ENCODE measurements at regions of chr7 and their contacts with region 1.

Region 1: DNA sequence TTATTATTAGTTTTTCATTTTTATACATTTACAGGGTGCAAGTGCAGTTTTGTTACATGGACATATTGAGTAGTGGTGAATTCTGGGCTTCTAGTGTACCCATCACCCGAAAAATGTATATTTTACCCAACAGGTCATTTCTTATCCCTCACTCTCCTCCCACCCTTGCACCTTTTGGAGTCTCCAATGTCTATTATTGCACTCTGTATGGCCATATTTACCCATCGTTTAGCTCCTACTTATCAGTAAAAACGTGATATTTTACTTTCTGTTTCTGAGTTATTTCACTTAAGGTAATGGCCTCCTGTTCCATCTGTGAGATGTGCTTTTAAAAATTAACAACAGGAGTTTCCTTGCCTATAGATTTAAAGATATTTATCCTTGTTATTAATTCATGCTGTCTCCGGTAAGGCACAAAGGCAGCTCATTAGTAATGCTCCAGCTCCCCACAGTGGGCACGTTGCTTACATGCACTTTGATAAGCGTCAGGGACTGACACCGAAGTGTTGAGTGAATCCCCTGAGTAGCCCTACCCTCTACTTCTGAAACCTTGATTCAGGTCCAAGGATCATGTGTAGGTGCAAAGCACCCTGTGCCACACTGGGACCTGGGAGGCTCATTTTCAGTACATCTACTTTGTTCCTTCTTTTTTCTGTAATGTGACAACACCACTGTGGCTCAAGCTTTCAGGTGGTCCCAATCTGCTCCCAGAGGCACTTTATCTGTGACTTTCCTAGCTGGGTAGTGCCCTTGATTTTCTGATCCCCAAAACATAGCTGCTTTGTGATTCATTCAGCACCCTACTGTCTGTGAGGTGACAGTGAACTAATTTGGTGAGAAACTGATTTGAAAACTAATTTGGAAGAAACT is 27.3 kb downstream of the HYAL4 start:
- DNase-seq: peak; percentile 74
- H3K4me3 ChIP-seq: no peak overlapping the region
- H3K27ac ChIP-seq: no peak overlapping the region
- H3K4me1 ChIP-seq: no peaks in the 10 kb centered on the region
- H3K27me3 ChIP-seq: no peaks in the 10 kb centered on the region
- CTCF ChIP-seq: peak; percentile 53 to 67
- POLR2A ChIP-seq: no peak

Region 2: GRCh38 chr7:122689346-122690109 is 1182.7 kb before region 1 on chr7:
- CTCF ChIA-PET with region 1: no interaction called
- POLR2A ChIA-PET with region 1: no interaction called
- dilution Hi-C with region 1: no loop called
- intact Hi-C with region 1: no loop called
- DNase-seq: no peak
- H3K4me3 ChIP-seq: no peak overlapping the region
- H3K27ac ChIP-seq: no peak overlapping the region
- H3K4me1 ChIP-seq: no peaks in the 10 kb centered on the region
- H3K27me3 ChIP-seq: no peaks in the 10 kb centered on the region
- CTCF ChIP-seq: no peak
- POLR2A ChIP-seq: no peak

Region 3: DNA sequence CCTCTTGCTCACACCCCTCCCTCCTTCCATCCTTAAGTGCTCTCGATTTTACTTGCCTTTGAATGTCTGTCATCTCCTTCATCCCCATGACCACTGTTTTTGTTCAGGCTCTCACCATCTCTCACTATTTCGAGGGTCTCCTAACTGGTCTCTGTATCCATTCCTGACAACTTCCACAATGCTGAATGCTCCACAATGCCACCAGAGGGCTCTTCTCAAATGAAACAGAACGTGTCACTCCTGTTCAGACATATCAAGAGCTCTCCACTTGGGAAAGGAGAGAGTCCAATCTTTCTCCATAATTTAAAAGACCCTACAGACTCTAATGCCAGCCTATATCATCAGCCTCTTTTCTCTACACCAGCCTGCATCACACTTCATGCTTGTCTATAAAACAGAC is 663.4 kb before region 1 on chr7:
- CTCF ChIA-PET with region 1: interaction called, 13 read pairs
- POLR2A ChIA-PET with region 1: no interaction called
- dilution Hi-C with region 1: no loop called
- intact Hi-C with region 1: no loop called
- DNase-seq: peak; percentile 11
- H3K4me3 ChIP-seq: no peak overlapping the region
- H3K27ac ChIP-seq: no peak overlapping the region
- H3K4me1 ChIP-seq: no peaks in the 10 kb centered on the region
- H3K27me3 ChIP-seq: no peaks in the 10 kb centered on the region
- CTCF ChIP-seq: peak in 1 of 2 donors; percentile 29
- POLR2A ChIP-seq: no peak

Region 4: DNA sequence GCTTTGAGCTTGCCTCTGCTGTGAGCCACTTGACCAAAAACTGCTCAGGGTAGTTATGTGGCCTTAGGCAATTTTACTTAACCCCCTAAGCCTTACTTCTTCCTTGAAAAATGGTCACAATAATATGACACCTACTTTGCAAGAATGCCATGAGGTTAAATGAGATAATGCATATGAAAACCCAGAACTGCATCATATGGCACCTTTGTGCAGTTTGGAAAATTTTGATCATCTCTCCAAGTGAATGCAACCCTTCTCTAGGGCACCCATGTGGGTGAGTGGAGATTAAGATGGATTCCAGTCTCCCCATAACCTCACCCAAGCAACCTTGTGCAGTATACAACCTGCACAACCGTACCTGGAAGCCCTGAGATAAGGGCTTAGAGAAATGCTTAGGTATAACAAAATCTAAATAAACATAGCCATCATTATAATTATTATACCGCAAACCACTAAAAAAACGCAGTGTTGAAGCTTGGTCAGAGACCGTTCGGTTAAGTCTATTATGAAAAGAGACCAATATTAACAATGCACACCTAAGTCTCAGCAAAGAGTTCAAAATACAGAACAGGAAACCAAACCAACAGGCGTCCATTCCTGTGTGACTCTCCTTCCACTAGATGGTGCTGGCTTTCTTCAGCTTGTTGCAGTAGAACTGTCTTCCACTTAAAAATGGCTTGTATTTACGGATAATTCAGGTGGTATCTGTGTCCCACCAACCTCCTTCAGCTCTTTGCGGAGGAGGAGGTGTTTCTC is 291.6 kb before region 1 on chr7:
- CTCF ChIA-PET with region 1: interaction called, 25 read pairs
- POLR2A ChIA-PET with region 1: no interaction called
- dilution Hi-C with region 1: no loop called
- intact Hi-C with region 1: loop called (anchors 2 kb)
- DNase-seq: peak; percentile 61
- H3K4me3 ChIP-seq: no peak overlapping the region
- H3K27ac ChIP-seq: no peak overlapping the region
- H3K4me1 ChIP-seq: no peaks in the 10 kb centered on the region
- H3K27me3 ChIP-seq: no peaks in the 10 kb centered on the region
- CTCF ChIP-seq: peak; percentile 69 to 73
- POLR2A ChIP-seq: no peak

Region 5: DNA sequence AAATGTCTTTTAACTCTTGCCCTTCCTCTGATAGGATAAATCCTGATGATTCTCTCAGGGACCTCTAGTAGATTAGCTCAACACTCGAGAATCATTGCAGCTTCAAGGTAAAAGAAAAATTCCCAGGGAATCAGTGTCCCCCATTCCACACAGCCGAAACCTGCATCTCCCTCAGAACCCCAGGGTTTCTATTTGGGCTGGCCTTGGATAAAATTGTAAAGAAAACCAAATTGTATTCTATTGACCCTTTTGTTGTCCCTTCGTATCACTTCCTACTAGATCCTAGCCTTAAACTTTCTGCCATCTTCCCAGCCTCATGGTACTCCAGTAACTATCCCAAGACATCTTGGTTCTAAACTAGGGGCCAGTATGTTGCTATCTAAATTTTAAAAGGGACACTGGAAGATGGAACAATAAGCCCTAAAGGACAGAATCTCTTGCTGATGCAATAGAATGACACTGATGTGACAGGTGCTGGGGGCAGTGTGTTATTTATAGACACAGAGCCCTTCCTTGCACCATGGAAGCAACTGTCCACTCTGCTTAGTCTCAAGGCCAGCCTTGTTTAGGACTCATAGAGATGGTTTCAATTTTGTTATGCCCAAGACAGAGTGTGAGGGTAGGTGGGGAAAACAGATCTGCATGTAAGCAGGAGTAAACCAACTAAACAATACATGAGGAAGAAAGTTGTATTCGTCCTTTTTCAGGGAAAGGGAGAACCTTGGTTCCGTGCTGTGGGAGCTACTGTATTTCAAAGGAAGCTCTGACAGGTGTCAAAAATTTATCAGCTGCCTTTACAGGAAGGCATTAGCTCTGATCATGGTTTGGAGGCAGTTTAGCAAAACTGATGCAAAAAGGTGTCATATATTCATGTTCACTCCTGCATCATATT is 263.0 kb before region 1 on chr7:
- CTCF ChIA-PET with region 1: no interaction called
- POLR2A ChIA-PET with region 1: no interaction called
- dilution Hi-C with region 1: no loop called
- intact Hi-C with region 1: no loop called
- DNase-seq: no peak
- H3K4me3 ChIP-seq: no peak overlapping the region
- H3K27ac ChIP-seq: no peak overlapping the region
- H3K4me1 ChIP-seq: no peaks in the 10 kb centered on the region
- H3K27me3 ChIP-seq: peaks cover 0 to 3% of the 10 kb centered on the region in 2 experiments
- CTCF ChIP-seq: no peak
- POLR2A ChIP-seq: no peak

Region 6: DNA sequence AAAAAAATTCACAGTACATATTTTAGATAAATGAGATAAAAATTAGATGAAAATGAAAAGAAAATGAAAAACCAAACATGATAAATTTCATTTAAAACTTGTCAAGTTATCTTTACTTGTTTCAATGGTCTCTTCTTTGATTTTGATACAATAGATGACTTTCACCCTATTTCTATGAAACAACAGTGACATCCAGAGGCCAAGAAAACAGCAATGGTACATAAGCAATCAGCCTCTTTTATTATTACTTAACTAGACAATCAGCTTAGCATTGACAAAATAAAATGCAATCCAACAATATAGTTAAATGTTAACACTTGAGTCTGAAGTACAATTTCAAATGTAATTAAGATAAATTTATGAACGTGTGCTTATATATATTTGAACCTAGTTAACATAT is 968.2 kb after region 1 on chr7:
- CTCF ChIA-PET with region 1: interaction called, 3 read pairs
- POLR2A ChIA-PET with region 1: no interaction called
- dilution Hi-C with region 1: no loop called
- intact Hi-C with region 1: loop called (anchors 10 kb)
- DNase-seq: peak; percentile 74
- H3K4me3 ChIP-seq: no peak overlapping the region
- H3K27ac ChIP-seq: no peak overlapping the region
- H3K4me1 ChIP-seq: peaks cover 17% of the 10 kb centered on the region
- H3K27me3 ChIP-seq: no peaks in the 10 kb centered on the region
- CTCF ChIP-seq: peak in 1 of 2 donors; percentile 5
- POLR2A ChIP-seq: no peak

Measured in endothelial cell of umbilical vein (primary cell).